CD8-positive, alpha-beta T cell (primary cell): ENCODE measurements at regions of chr13 and their contacts with region 1.

Region 1: GRCh38 chr13:29850224-29850898 is at the start of gene UBL3:
- DNase-seq: peak; percentile 89 to 97 (median 94)
- ATAC-seq: peak; percentile 89
- H3K4me3 ChIP-seq: peak within 1 kb of the TSS; percentile 84 to 86
- H3K4me3 Mint-ChIP-seq: peak within 1 kb of the TSS; percentile 93
- H3K27ac ChIP-seq: peak within 1 kb of the TSS; percentile 90 to 96
- H3K27ac Mint-ChIP-seq: peak within 1 kb of the TSS; percentile 99
- H3K4me1 ChIP-seq: peaks cover 13% of the 10 kb centered on the region
- H3K4me1 Mint-ChIP-seq: peaks cover 24% of the 10 kb centered on the region
- H3K27me3 ChIP-seq: no peaks in the 10 kb centered on the region
- H3K27me3 Mint-ChIP-seq: no peaks in the 10 kb centered on the region
- CTCF ChIP-seq: no peak
- total RNA-seq, gene UBL3: 40.0 to 43.1 TPM

Region 2: DNA sequence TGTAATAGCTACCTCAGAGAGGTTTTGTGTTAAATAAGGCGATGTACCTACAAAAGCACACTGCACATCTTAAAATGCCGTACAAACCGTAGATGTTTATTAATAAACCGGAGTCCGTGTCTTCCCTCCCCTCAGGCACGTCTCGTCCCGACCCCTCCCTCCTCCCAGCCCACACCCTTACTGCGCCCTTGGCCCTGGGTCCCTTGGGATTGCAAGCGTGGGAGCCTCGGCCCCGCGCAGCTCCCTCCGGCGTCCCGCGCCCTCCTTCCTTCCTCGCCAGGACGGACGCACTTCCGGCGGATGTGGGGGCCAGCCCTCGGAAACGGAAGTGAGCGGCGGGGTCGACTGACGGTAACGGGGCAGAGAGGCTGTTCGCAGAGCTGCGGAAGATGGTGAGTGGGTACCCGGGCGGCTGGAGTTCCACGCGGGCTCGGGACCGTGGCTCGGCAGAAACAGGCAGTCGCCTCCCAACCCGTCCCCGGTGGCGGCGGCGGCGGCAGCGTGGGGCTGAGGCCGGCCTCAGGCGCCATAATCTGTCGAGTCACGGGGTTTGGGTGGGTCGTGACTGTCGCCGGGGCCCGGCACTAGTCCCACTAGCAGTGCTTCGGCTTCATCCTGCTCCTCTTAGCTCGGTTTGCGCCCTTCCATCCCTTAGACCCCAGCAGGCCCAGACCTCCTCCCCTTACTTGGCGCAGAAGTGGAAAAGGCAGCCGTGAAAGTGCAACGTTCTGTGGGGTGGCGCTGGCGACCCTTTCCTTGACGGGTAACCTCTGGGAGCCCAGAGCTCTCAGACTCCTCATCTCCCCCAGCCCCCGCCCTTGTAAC is 1191.4 kb before region 1 on chr13 and contains the start of gene POMP:
- CTCF ChIA-PET with region 1: no interaction called
- POLR2A ChIA-PET with region 1: no interaction called
- intact Hi-C with region 1: loop called in 1 of 2 experiments (anchors 5 kb)
- DNase-seq: peak; percentile 79 to 95 (median 93)
- ATAC-seq: peak; percentile 77
- H3K4me3 ChIP-seq: peak within 1 kb of the TSS; percentile 72 to 73
- H3K4me3 Mint-ChIP-seq: peak within 1 kb of the TSS; percentile 98
- H3K27ac ChIP-seq: peak within 1 kb of the TSS; percentile 85 to 97
- H3K27ac Mint-ChIP-seq: peak within 1 kb of the TSS; percentile 99
- H3K4me1 ChIP-seq: peaks cover 33% of the 10 kb centered on the region
- H3K4me1 Mint-ChIP-seq: peaks cover 62% of the 10 kb centered on the region
- H3K27me3 ChIP-seq: no peaks in the 10 kb centered on the region
- H3K27me3 Mint-ChIP-seq: no peaks in the 10 kb centered on the region
- CTCF ChIP-seq: no peak
- total RNA-seq, gene POMP: 34.7 to 38.0 TPM

Region 3: GRCh38 chr13:29561918-29562317 is 288.4 kb before region 1 on chr13:
- CTCF ChIA-PET with region 1: no interaction called
- POLR2A ChIA-PET with region 1: no interaction called
- intact Hi-C with region 1: no loop called
- DNase-seq: no peak
- ATAC-seq: no peak
- H3K4me3 ChIP-seq: no peak overlapping the region
- H3K4me3 Mint-ChIP-seq: no peak overlapping the region
- H3K27ac ChIP-seq: no peak overlapping the region
- H3K27ac Mint-ChIP-seq: no peak overlapping the region
- H3K4me1 ChIP-seq: no peaks in the 10 kb centered on the region
- H3K4me1 Mint-ChIP-seq: peaks cover 17% of the 10 kb centered on the region
- H3K27me3 ChIP-seq: no peaks in the 10 kb centered on the region
- H3K27me3 Mint-ChIP-seq: no peaks in the 10 kb centered on the region
- CTCF ChIP-seq: no peak

Region 4: DNA sequence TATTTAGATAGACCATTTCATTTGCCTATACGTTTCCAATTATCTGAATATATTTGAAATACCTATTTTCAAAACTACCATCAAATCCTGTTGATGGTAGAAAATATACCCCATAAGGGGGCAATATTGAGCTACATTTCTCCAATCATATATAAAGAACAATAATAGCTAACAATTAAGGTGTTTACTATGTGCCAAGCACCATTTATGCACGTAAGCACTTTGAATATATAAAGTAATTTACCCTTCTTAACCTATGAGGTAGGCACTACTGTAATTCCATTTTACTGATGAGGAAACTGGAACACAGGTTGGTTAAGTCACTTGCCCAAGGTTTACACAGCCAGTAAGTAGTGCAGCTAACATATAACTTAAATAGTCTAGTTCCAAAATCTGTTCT is 79.1 kb before region 1 on chr13:
- CTCF ChIA-PET with region 1: interaction called, 4 read pairs
- POLR2A ChIA-PET with region 1: no interaction called
- intact Hi-C with region 1: loop called in 1 of 2 experiments (anchors 2 kb)
- DNase-seq: peak in 2 of 9 experiments; percentile 55 to 68
- ATAC-seq: peak; percentile 65
- H3K4me3 ChIP-seq: no peak overlapping the region
- H3K4me3 Mint-ChIP-seq: no peak overlapping the region
- H3K27ac ChIP-seq: no peak overlapping the region
- H3K27ac Mint-ChIP-seq: no peak overlapping the region
- H3K4me1 ChIP-seq: no peaks in the 10 kb centered on the region
- H3K4me1 Mint-ChIP-seq: no peaks in the 10 kb centered on the region
- H3K27me3 ChIP-seq: no peaks in the 10 kb centered on the region
- H3K27me3 Mint-ChIP-seq: no peaks in the 10 kb centered on the region
- CTCF ChIP-seq: peak; percentile 77

Region 5: GRCh38 chr13:29935309-29935981 is 85.1 kb after region 1 on chr13:
- CTCF ChIA-PET with region 1: interaction called, 25 read pairs
- POLR2A ChIA-PET with region 1: interaction called, 44 read pairs
- intact Hi-C with region 1: loop called (anchors 1 to 5 kb)
- DNase-seq: peak; percentile 40 to 90 (median 74)
- ATAC-seq: peak; percentile 95
- H3K4me3 ChIP-seq: peak overlapping the region; percentile 40 to 51
- H3K4me3 Mint-ChIP-seq: peak overlapping the region; percentile 86
- H3K27ac ChIP-seq: peak overlapping the region; percentile 29 to 47
- H3K27ac Mint-ChIP-seq: peak overlapping the region; percentile 96
- H3K4me1 ChIP-seq: peaks cover 44% of the 10 kb centered on the region
- H3K4me1 Mint-ChIP-seq: peaks cover 50% of the 10 kb centered on the region
- H3K27me3 ChIP-seq: no peaks in the 10 kb centered on the region
- H3K27me3 Mint-ChIP-seq: no peaks in the 10 kb centered on the region
- CTCF ChIP-seq: no peak

Region 6: DNA sequence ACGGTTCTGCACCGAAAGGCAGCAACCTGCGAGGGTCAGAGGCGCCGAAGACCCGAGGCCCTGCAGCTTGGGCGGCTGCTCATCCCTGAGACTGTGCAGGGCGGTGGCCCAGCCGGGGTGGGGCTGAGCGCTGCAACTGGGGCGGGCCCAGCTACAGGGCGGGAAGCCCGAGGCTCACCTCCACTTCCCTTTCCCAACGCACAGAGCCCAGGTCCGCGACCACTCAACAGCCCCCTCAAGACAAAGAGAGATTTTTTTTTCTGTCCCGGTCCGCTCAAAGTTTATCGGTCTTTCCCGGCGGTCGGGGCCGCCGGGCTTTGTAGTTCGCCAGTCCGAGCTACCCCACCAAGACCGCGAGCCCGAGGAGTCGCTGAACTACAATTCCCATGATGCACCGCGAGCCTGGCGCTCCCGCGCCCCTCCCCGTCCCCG is 456.4 kb after region 1 on chr13:
- CTCF ChIA-PET with region 1: no interaction called
- POLR2A ChIA-PET with region 1: interaction called, 4 read pairs
- intact Hi-C with region 1: loop called (anchors 2 kb)
- DNase-seq: peak; percentile 80 to 94 (median 92)
- ATAC-seq: peak; percentile 86
- H3K4me3 ChIP-seq: peak overlapping the region; percentile 79 to 97
- H3K4me3 Mint-ChIP-seq: peak overlapping the region; percentile 89
- H3K27ac ChIP-seq: peak overlapping the region; percentile 56 to 60
- H3K27ac Mint-ChIP-seq: peak overlapping the region; percentile 79
- H3K4me1 ChIP-seq: peaks cover 5% of the 10 kb centered on the region
- H3K4me1 Mint-ChIP-seq: peaks cover 8% of the 10 kb centered on the region
- H3K27me3 ChIP-seq: no peaks in the 10 kb centered on the region
- H3K27me3 Mint-ChIP-seq: no peaks in the 10 kb centered on the region
- CTCF ChIP-seq: no peak

Region 7: GRCh38 chr13:30408319-30409101 is 558.1 kb after region 1 on chr13:
- CTCF ChIA-PET with region 1: no interaction called
- POLR2A ChIA-PET with region 1: no interaction called
- intact Hi-C with region 1: loop called in 1 of 2 experiments (anchors 1 kb)
- DNase-seq: peak; percentile 82 to 94 (median 90)
- ATAC-seq: peak; percentile 94
- H3K4me3 ChIP-seq: peak overlapping the region; percentile 31 to 39
- H3K4me3 Mint-ChIP-seq: peak overlapping the region; percentile 72
- H3K27ac ChIP-seq: peak overlapping the region in 1 of 2 experiments; percentile 67
- H3K27ac Mint-ChIP-seq: peak overlapping the region; percentile 86
- H3K4me1 ChIP-seq: peaks cover 14% of the 10 kb centered on the region
- H3K4me1 Mint-ChIP-seq: peaks cover 27% of the 10 kb centered on the region
- H3K27me3 ChIP-seq: no peaks in the 10 kb centered on the region
- H3K27me3 Mint-ChIP-seq: no peaks in the 10 kb centered on the region
- CTCF ChIP-seq: peak; percentile 74

Region 8: GRCh38 chr13:31161828-31162590 is 1311.6 kb after region 1 on chr13 and contains the start of gene HSPH1:
- CTCF ChIA-PET with region 1: no interaction called
- POLR2A ChIA-PET with region 1: no interaction called
- intact Hi-C with region 1: loop called (anchors 5 kb)
- DNase-seq: peak; percentile 96 to 99 (median 98)
- ATAC-seq: peak; percentile 83
- H3K4me3 ChIP-seq: peak within 1 kb of the TSS; percentile 76 to 95
- H3K4me3 Mint-ChIP-seq: peak within 1 kb of the TSS; percentile 95
- H3K27ac ChIP-seq: peak within 1 kb of the TSS; percentile 98
- H3K27ac Mint-ChIP-seq: peak within 1 kb of the TSS; percentile 98
- H3K4me1 ChIP-seq: peaks cover 25% of the 10 kb centered on the region
- H3K4me1 Mint-ChIP-seq: peaks cover 43% of the 10 kb centered on the region
- H3K27me3 ChIP-seq: no peaks in the 10 kb centered on the region
- H3K27me3 Mint-ChIP-seq: no peaks in the 10 kb centered on the region
- CTCF ChIP-seq: no peak
- total RNA-seq, gene HSPH1: 189 to 199 TPM